Spleen (tissue), 13 donors: ENCODE measurements at regions of chr2 and their contacts with region 1.

Region 1: DNA sequence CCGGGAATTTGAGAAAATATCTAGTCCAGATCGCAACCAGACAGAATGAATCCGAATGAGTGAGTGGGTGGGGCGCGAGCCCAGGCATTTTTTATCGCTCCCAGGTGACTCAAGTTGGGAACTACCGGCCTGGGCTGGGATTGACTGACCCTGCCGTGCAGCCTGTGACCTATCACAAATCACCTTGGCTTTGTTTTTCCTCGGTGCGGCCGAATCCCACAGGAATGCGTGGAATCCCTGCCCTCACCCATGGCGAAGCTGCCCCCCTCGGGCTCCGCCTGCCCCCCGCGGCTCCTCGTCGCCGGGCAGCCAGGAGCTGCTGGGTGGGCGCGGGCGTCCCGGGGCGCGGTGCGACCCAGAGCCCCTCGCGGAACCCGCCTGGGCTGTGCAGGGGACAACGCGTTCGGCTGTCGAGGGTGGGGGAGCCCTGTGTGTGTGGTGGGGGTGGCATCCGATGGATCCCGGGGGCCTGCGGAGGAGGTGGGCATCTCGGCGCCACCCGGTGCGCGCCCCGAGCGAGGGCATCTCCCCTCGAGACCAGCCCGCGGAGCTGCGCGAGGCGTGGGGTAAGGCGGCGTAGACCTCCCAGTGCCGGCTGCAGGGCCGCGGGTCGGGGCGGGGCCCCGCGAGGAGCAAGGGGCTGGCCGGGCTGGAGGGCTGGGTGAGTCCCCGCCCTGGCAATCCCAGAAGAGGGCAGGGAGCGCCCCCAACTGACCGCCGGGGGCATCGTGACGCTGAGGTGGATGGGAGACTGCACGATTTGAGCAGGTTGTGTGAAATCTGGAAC is 16.5 kb downstream of the B3GNT7 start:
- DNase-seq: peak; percentile 94
- H3K4me3 ChIP-seq: peak overlapping the region; percentile 30 to 77 (median 48)
- H3K27ac ChIP-seq: peak overlapping the region in 1 of 8 donors; percentile 42
- H3K4me1 ChIP-seq: peaks cover 0 to 18% (median 15%) of the 10 kb centered on the region in 6 donors
- H3K27me3 ChIP-seq: peaks cover 0 to 24% (median 5%) of the 10 kb centered on the region in 7 donors
- CTCF ChIP-seq: peak; percentile 72 to 91 (median 87)
- POLR2A ChIP-seq: no peak

Region 2: DNA sequence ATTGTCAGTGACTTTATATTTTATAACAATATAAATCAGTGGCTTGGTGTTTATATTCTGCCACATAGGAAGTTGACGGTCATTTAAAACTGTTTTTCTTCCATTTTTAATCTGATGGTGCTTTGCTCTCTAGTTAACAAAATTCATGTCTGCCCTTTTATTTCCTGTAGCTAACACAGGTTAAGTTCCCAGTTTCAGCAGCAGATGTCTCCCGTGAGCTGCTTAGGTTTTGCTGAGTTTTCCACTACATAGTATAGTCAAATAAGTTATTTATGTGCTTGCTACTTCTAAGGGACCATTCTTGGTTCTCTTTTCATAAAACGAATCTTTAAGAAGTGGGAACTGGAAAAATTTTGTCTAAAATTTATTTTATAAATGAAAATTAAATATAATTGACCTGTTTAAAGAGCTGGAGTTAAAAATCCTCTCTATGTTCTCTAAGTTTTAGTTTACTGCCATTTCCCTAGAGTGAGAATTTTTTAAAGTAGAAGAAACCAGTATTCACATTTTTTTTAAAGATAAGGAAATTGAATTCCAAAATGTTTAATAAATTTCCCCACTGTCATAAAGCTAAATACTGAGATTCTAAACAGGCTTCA is 307.8 kb before region 1 on chr2:
- intact Hi-C with region 1: loop called (anchors 5 kb)
- DNase-seq: no peak
- H3K4me3 ChIP-seq: no peak overlapping the region
- H3K27ac ChIP-seq: peak overlapping the region in 1 of 8 donors; percentile 12
- H3K4me1 ChIP-seq: peaks cover 0 to 15% (median 10%) of the 10 kb centered on the region in 6 donors
- H3K27me3 ChIP-seq: no peaks in the 10 kb centered on the region
- CTCF ChIP-seq: peak; percentile 60 to 81 (median 74)
- POLR2A ChIP-seq: no peak

Region 3: DNA sequence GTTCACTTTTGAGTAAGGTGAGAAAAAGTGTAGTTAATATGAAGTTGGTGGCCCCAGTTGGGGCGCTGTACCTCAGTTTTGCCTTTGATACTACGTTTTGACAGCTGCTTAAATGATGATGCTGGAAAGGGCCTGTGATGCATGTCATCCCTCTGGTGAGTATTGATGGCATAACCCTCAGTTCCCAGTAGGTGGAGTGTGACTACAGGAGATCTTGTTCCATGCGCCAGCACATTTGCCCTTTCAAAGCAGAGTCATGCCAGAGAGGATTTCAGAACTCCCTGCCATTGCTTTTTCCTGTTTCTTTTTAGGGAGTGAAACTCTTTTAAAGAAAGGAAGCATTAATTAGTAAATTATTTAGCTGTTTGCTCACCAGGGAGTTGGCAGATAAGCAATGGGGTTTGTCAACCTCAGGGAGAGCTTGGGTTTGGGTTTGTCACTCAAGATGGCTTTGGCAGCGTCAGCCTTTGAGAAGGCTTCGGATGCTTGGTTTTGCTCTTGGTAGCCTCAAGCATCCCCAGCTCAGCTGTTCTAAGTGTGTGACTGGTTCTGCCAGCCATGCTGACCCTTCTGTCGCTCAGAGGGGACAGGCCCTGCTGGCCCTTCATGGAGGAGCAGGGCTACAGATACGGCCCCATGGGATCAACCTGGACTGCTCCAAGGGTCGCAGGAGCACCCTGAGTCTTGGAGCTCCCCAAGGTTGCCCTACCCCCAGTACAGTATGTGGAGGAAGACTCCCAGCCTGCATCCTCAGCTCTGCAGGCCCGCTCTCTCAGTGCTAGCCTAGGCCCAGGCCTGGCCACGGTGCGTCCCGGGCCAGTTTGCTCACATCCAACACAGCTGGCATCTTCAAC is 184.5 kb before region 1 on chr2:
- intact Hi-C with region 1: loop called (anchors 5 kb)
- DNase-seq: no peak
- H3K4me3 ChIP-seq: no peak overlapping the region
- H3K27ac ChIP-seq: peak overlapping the region in 5 of 8 donors; percentile 9 to 55 (median 43)
- H3K4me1 ChIP-seq: peaks cover 5 to 28% (median 20%) of the 10 kb centered on the region in 6 donors
- H3K27me3 ChIP-seq: no peaks in the 10 kb centered on the region
- CTCF ChIP-seq: peak; percentile 52 to 89 (median 78)
- POLR2A ChIP-seq: no peak

Region 4: GRCh38 chr2:231297108-231297908 is 114.7 kb before region 1 on chr2:
- intact Hi-C with region 1: loop called (anchors 5 kb)
- DNase-seq: peak; percentile 86
- H3K4me3 ChIP-seq: no peak overlapping the region
- H3K27ac ChIP-seq: peak overlapping the region in 1 of 8 donors; percentile 8
- H3K4me1 ChIP-seq: peaks cover 5 to 47% (median 26%) of the 10 kb centered on the region in 6 donors
- H3K27me3 ChIP-seq: no peaks in the 10 kb centered on the region
- CTCF ChIP-seq: peak; percentile 39 to 86 (median 73)
- POLR2A ChIP-seq: no peak

Region 5: DNA sequence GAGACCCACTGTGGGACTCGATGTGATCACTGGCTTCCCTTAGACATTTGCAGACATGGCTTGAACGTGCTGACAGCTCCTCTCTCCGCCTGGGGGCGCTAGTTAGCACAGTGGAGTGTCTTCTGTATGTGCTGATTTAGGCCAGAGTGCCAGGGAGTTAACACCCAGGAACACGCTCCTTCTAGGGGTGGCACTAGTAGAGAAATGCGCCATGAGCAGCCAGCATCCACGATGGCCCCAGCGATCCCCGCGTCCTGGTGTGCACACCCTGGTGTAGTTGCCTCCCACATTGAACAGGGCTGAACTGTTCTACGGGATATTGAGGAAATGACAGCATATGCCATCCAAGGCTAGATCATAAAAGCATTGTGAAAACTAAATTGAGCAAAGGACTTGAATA is 129.6 kb after region 1 on chr2:
- intact Hi-C with region 1: no loop called
- DNase-seq: peak; percentile 65
- H3K4me3 ChIP-seq: no peak overlapping the region
- H3K27ac ChIP-seq: peak overlapping the region in 4 of 8 donors; percentile 20 to 46 (median 22)
- H3K4me1 ChIP-seq: peaks cover 17 to 38% (median 26%) of the 10 kb centered on the region in 6 donors
- H3K27me3 ChIP-seq: no peaks in the 10 kb centered on the region
- CTCF ChIP-seq: peak in 1 of 11 experiments; percentile 9
- POLR2A ChIP-seq: no peak